Activated CD8-positive, alpha-beta T cell treated with anti-CD3 and anti-CD28 coated beads, Interleukin-2, amount 10 ng/mL, durations not matched to agents 7 days and 5 days (primary cell): ENCODE measurements at regions of chr22 and their contacts with region 1.

Region 1: DNA sequence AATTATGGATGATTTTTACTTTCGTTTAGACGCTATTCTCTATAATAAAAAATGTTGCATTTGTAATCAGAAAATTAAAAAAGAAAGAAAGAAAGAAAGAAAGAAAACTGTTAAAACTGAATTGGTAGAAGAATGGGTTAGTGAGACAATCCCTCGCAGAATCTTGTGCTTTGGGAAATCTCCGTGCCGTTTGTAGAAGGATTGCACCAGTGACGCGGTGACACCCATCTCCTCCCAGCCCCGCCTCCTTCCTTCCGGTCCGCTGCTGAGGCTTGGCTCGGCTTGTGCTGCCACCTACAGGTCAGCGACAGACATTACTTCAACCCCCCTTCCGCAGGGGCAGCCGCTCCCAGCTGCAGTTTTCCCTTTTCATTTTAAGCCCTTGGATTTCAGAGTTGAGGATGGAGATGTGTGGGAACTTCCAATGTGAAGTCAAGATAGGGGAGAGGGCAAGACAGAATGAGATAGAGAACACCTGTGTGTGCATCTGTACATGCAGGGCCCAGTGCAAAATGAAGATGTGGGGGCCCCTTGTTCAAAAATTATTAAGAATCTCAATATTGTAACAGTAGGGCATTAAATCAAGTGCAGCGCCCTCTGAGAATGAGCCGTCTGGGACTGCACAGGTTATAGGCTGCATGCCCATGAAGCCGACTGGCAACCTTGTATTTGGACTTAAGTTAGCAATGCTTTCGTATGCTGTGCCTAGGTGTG is 41.1 kb downstream of the TST start:
- DNase-seq: peak; percentile 94
- ATAC-seq: peak; percentile 88
- H3K4me3 Mint-ChIP-seq: peak overlapping the region; percentile 85
- H3K27ac Mint-ChIP-seq: peak overlapping the region; percentile 92
- H3K4me1 Mint-ChIP-seq: peaks cover 20% of the 10 kb centered on the region
- H3K27me3 Mint-ChIP-seq: peaks cover 5% of the 10 kb centered on the region

Region 2: GRCh38 chr22:36757668-36758211 is 220.4 kb before region 1 on chr22:
- CTCF ChIA-PET with region 1: interaction called, 25 read pairs
- POLR2A ChIA-PET with region 1: no interaction called
- DNase-seq: peak; percentile 85
- ATAC-seq: peak; percentile 88
- H3K4me3 Mint-ChIP-seq: no peak overlapping the region
- H3K27ac Mint-ChIP-seq: no peak overlapping the region
- H3K4me1 Mint-ChIP-seq: no peaks in the 10 kb centered on the region
- H3K27me3 Mint-ChIP-seq: peaks cover 4% of the 10 kb centered on the region

Region 3: DNA sequence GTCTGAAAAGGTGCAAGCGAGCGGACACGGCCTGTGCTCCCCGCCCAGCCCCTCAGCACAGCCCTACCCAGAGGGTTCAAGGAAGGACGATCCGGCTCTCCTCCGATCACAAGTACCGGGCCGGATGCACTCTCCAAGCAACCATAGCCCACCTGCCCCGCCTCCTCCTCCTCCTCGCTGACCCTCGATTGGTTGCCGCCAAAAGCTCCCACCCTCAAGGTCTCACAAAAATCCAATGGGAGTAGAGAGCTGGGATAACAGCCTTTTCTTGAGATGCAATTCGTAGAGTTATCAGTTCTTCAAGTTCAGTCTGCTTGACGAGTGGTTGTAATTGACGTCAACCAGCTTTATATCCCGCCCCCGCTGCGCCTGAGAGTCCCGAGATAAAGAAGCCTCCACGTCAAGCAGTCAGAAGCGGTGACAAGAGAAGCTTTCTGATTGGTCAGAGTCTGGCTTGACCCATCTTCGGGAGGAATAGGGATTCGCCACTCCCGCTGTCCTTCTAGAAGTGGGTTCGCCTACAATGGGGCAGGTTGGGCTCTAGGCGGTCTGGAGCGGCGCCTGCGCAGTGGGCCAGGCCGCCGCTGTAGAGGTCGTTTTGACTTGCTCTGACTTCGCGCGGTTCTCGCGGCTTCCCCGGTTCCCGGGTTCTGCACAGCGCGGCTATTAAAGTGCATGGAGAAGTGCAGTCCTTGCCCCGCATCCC is 202.0 kb before region 1 on chr22 and contains the start of gene IFT27:
- CTCF ChIA-PET with region 1: interaction called, 29 read pairs
- POLR2A ChIA-PET with region 1: interaction called, 4 read pairs
- DNase-seq: peak; percentile 99
- ATAC-seq: peak; percentile 95
- H3K4me3 Mint-ChIP-seq: peak within 1 kb of the TSS; percentile 80
- H3K27ac Mint-ChIP-seq: peak within 1 kb of the TSS; percentile 91
- H3K4me1 Mint-ChIP-seq: peaks cover 31% of the 10 kb centered on the region
- H3K27me3 Mint-ChIP-seq: no peaks in the 10 kb centered on the region
- total RNA-seq, gene IFT27: 26.5 to 27.2 TPM

Region 4: GRCh38 chr22:36781656-36782627 is 196.2 kb before region 1 on chr22:
- CTCF ChIA-PET with region 1: interaction called, 29 read pairs
- POLR2A ChIA-PET with region 1: interaction called, 3 read pairs
- DNase-seq: peak; percentile 93
- ATAC-seq: peak; percentile 94
- H3K4me3 Mint-ChIP-seq: no peak overlapping the region
- H3K27ac Mint-ChIP-seq: peak overlapping the region; percentile 83
- H3K4me1 Mint-ChIP-seq: peaks cover 29% of the 10 kb centered on the region
- H3K27me3 Mint-ChIP-seq: no peaks in the 10 kb centered on the region

Region 5: DNA sequence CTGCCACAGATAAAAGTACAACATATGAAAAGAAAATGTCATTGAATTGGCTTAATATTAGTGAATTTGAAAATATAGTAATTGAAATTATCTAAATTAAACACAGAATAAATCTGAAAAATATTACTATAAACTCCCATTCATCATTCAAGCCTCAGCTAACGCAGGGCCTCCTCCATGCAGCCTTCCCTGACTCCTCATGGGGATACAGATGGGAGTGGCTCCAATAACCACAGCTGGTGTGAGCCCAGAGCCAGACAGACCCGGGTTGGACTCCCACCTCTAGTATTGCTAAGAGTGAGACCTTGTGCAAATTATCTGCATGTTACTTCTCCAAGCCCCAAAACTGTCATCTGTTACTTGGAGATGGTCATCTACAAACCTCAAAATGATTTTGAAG is 19.7 kb before region 1 on chr22:
- CTCF ChIA-PET with region 1: interaction called, 12 read pairs
- POLR2A ChIA-PET with region 1: no interaction called
- DNase-seq: no peak
- ATAC-seq: no peak
- H3K4me3 Mint-ChIP-seq: no peak overlapping the region
- H3K27ac Mint-ChIP-seq: no peak overlapping the region
- H3K4me1 Mint-ChIP-seq: no peaks in the 10 kb centered on the region
- H3K27me3 Mint-ChIP-seq: peaks cover 18% of the 10 kb centered on the region

Region 6: DNA sequence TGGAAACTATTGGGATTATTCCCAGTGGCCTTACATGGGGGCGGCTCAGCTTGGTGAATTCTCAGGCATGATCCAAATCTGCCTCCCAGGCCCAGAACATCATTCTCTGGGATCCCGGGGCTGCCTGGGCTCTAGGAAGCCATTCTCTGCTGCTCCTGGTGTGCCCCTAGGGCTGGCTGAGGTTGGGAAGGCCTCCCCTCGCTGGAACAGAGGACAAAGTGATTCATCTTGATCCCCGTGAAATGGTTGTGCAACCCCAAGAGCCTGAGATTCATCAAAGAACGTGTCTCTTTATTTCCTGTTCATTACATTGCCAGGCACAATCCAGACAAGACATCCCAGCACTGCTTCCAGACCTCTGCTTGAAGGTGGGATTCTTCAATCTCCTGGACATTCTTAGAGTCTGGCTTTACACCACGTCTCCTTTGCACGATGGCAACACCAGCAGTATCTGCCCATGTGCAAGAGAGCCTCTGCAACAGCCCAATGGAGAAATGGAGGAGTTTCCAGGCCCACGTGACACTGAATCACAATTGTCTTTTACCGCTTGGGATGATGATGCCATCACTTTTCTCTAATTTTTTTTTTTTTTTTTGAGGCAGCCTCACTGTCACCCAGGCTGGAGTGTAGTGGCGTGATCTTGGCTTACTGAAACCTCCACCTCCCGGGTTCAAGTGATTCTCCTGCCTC is 11.1 kb before region 1 on chr22:
- CTCF ChIA-PET with region 1: interaction called, 43 read pairs
- POLR2A ChIA-PET with region 1: interaction called, 3 read pairs
- DNase-seq: no peak
- ATAC-seq: no peak
- H3K4me3 Mint-ChIP-seq: no peak overlapping the region
- H3K27ac Mint-ChIP-seq: no peak overlapping the region
- H3K4me1 Mint-ChIP-seq: peaks cover 3% of the 10 kb centered on the region
- H3K27me3 Mint-ChIP-seq: peaks cover 4% of the 10 kb centered on the region

Region 7: GRCh38 chr22:37098976-37099591 is 121.0 kb after region 1 on chr22:
- CTCF ChIA-PET with region 1: no interaction called
- POLR2A ChIA-PET with region 1: no interaction called
- DNase-seq: no peak
- ATAC-seq: no peak
- H3K4me3 Mint-ChIP-seq: no peak overlapping the region
- H3K27ac Mint-ChIP-seq: peak overlapping the region; percentile 65
- H3K4me1 Mint-ChIP-seq: peaks cover 27% of the 10 kb centered on the region
- H3K27me3 Mint-ChIP-seq: no peaks in the 10 kb centered on the region

Region 8: GRCh38 chr22:37109242-37109917 is 131.3 kb after region 1 on chr22 and contains the start of gene TMPRSS6:
- CTCF ChIA-PET with region 1: no interaction called
- POLR2A ChIA-PET with region 1: no interaction called
- DNase-seq: no peak
- ATAC-seq: no peak
- H3K4me3 Mint-ChIP-seq: no peak within 1 kb of the TSS
- H3K27ac Mint-ChIP-seq: no peak within 1 kb of the TSS
- H3K4me1 Mint-ChIP-seq: peaks cover 15% of the 10 kb centered on the region
- H3K27me3 Mint-ChIP-seq: no peaks in the 10 kb centered on the region
- total RNA-seq, gene TMPRSS6: 1.1 TPM

Region 9: DNA sequence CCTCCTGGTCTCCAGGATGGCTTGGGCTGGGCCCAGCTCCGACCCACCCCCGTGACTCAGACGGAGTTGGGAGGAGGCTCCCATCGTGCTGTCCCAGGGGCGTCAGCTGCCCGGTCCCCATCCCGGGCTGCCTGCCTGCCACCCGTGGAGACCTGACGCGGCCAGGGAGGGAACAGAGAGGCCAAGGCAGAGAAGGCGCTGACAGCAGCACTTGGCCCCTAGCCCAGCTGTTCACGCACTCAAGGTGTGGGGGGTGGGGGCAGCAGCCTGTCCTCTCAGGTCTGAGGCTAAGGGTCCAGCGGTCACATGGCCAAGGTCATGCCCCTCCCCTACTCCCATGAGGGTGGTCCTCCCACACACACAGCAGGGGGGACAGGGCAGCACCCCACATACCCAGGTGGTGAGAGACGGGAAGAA is 400.5 kb after region 1 on chr22:
- CTCF ChIA-PET with region 1: no interaction called
- POLR2A ChIA-PET with region 1: no interaction called
- DNase-seq: no peak
- ATAC-seq: no peak
- H3K4me3 Mint-ChIP-seq: no peak overlapping the region
- H3K27ac Mint-ChIP-seq: no peak overlapping the region
- H3K4me1 Mint-ChIP-seq: no peaks in the 10 kb centered on the region
- H3K27me3 Mint-ChIP-seq: peaks cover 18% of the 10 kb centered on the region